Heart left ventricle (tissue), 16 donors: ENCODE measurements at regions of chr3 and their contacts with region 1.

Region 1: DNA sequence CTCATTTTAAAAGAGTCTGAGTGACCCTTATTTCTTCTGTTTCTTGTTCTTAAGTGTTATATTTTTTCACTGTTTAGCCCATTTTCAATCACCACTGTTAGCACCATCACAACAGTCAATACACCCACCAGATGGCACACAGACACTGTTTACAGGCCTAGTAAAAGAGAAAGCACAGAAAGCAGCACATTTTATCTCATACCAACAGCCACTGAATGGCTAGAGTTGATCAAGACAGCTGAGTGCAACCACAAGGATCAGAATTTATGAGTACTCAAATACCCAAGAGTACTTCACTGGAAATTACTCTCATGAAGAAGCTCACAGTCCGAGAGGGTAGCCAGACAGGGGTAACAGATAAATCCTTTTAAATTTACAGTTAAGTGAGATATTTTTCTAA is 127.0 kb downstream of the TFDP2 start:
- DNase-seq: no peak
- ATAC-seq: peak in 3 of 4 donors; percentile 52 to 69 (median 61)
- H3K4me3 ChIP-seq: no peak overlapping the region
- H3K27ac ChIP-seq: peak overlapping the region in 5 of 12 donors; percentile 3 to 44 (median 29)
- H3K4me1 ChIP-seq: peaks cover 3 to 44% (median 15%) of the 10 kb centered on the region in 12 donors
- H3K27me3 ChIP-seq: no peaks in the 10 kb centered on the region
- CTCF ChIP-seq: peak in 6 of 12 donors; percentile 6 to 28 (median 19)
- POLR2A ChIP-seq: no peak

Region 2: DNA sequence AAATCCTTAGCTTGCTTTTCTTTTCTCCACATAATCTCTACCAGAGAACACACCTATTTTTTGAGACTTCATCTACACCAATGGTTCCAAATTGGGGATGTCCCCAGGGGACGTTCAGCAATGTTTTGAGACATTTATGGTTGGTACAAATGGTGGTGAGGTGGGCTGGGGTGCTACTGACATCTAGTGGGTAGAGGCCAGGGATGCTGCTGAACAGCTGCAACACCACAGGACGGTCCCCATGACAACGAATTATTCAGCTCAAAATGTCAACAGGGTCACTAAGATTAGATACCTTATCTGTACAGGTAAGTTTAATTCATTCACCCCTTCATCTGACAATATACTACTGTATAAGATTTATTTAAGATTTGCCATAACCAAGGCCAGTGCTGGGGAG is 188.7 kb after region 1 on chr3:
- intact Hi-C with region 1: loop called in 1 of 10 experiments (anchors 5 kb)
- DNase-seq: no peak
- ATAC-seq: peak in 3 of 4 donors; percentile 50 to 72 (median 60)
- H3K4me3 ChIP-seq: no peak overlapping the region
- H3K27ac ChIP-seq: peak overlapping the region in 2 of 12 donors; percentile 69 to 86
- H3K4me1 ChIP-seq: peaks cover 0 to 32% (median 13%) of the 10 kb centered on the region in 12 donors
- H3K27me3 ChIP-seq: no peaks in the 10 kb centered on the region
- CTCF ChIP-seq: peak in 7 of 12 donors; percentile 5 to 41 (median 28)
- POLR2A ChIP-seq: no peak